ENCODE measurements at regions of chr12 and their contacts with region 1.

Region 1: DNA sequence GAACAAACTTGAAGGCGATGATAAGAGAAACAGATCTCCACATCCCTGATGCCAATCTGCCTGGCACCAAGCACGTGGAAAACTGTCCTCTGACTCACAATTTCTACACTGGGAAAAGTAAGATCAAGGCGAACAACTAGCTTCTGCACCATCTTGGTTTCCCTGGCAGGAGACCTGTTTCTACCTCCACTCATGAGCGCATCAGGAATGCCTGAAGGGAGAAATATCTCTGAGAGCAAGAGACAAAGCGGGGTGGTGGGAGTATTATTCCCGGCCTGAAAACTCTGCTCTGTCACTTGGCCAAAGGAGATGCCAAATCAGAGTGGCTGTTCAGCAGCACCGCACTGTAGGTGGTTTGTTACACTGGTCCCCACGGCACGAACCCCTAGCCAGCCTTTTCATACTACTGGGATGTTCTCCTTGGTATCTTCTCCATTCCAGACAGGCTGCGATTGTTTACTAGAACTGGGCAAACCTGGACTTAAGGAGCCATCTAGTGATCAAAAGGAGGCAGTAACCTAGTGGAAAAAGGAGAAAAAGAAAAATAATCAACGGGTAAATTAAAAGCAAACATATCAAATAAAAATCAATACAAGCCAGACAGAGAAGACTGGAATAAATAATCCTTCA is 59.0 kb upstream of the TMTC2 start:
- DNase-seq: no peak
- ATAC-seq: peak; percentile 66
- H3K4me3 ChIP-seq: no peak overlapping the region
- H3K27ac ChIP-seq: no peak overlapping the region
- H3K4me1 ChIP-seq: no peaks in the 10 kb centered on the region
- H3K27me3 ChIP-seq: no peaks in the 10 kb centered on the region
- CTCF ChIP-seq: no peak

Region 2: DNA sequence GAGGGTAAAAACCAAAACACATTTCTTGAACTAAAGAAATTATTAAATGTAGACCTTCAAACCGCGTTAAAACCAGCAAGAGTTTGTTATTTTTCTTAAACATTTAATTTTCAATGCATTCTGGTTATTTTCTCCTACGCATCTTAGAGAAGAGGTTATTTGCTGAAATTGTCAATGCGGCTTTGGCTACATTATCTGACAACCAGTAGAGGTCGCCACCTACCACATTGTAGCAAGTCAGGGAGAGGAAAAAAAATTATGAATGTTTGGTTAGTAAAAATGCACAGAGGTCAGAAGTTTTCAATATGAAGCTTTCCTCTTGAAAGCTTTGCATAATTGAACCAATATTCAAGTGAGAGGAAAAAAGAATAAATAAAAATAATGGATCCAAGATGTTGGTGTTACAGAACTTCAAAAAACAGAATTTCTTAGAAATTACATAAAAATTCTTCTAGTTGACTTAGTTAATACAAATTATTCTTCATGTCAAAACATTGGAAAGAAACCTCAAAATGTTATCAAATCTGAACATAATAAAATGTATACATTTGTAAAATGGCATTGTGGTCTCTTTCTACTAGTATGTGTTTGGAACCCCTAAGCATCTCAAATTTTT is 100.4 kb before region 1 on chr12:
- intact Hi-C with region 1: loop called in 1 of 2 experiments (anchors 10 kb)
- DNase-seq: peak in 2 of 4 donors; percentile 45 to 81
- ATAC-seq: peak; percentile 73
- H3K4me3 ChIP-seq: no peak overlapping the region
- H3K27ac ChIP-seq: no peak overlapping the region
- H3K4me1 ChIP-seq: no peaks in the 10 kb centered on the region
- H3K27me3 ChIP-seq: no peaks in the 10 kb centered on the region
- CTCF ChIP-seq: peak; percentile 64 to 83